Left colon (tissue), 2 donors: ENCODE measurements at regions of chr18 and their contacts with region 1.

Region 1: GRCh38 chr18:3380384-3380961 is 69.5 kb upstream of the TGIF1 start:
- DNase-seq: no peak
- ATAC-seq: no peak

Region 2: DNA sequence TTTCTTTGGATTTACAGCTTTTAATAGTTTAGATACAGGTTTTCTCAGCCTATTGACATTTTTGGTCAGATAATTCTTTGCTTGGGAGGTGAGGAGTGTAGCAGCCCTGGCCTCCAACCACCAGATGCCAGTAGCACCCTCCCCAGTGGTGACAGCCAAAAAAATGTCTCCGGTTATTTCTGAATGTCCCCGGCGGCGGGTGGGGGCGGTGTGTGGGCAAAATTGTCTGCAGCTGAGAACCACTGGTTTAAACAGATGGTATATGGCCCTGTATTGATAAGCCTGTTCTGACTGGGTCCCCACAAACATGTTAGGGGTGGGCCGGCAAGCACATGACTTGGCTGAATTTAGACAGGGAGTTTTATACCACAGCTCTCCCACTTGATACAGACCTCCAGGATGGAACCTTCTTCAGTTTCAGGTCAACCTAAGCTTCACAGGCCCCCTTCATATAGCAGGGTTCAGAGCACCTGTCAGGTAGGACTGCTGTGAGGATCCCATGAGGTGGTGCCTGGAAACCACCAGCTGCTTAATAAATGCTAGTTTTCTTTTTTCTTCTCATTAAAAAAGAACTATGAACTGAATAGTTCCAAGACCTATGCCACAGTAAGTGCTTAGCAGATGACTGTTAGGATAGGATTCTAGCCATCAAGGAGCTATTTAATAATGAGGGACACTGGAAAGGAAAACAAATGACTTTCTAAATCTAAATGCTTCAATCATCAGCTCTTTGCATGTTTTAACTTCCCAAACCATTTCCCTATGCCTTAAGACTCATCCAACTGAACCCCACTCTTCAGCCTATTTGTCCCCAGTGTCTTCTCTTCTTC is 385.7 kb before region 1 on chr18:
- intact Hi-C with region 1: no loop called
- DNase-seq: peak in 1 of 2 donors; percentile 32
- ATAC-seq: peak; percentile 47

Region 3: GRCh38 chr18:3321133-3321812 is 59.2 kb before region 1 on chr18:
- intact Hi-C with region 1: loop called in 1 of 2 experiments (anchors 10 kb)
- DNase-seq: no peak
- ATAC-seq: no peak